Calu3 (cell line): ENCODE measurements at regions of chr11 and their contacts with region 1.

Region 1: GRCh38 chr11:73439002-73439843 is 63.0 kb downstream of the RELT start:
- DNase-seq: no peak
- H3K4me3 Mint-ChIP-seq: no peak overlapping the region
- H3K27ac Mint-ChIP-seq: no peak overlapping the region
- H3K4me1 Mint-ChIP-seq: no peaks in the 10 kb centered on the region
- H3K27me3 Mint-ChIP-seq: no peaks in the 10 kb centered on the region
- CTCF ChIP-seq: no peak

Region 2: GRCh38 chr11:72630104-72630852 is 808.9 kb before region 1 on chr11:
- CTCF ChIA-PET with region 1: interaction called, 10 read pairs
- intact Hi-C with region 1: no loop called
- DNase-seq: no peak
- H3K4me3 Mint-ChIP-seq: no peak overlapping the region
- H3K27ac Mint-ChIP-seq: no peak overlapping the region
- H3K4me1 Mint-ChIP-seq: no peaks in the 10 kb centered on the region
- H3K27me3 Mint-ChIP-seq: peaks cover 66% of the 10 kb centered on the region
- CTCF ChIP-seq: no peak

Region 3: DNA sequence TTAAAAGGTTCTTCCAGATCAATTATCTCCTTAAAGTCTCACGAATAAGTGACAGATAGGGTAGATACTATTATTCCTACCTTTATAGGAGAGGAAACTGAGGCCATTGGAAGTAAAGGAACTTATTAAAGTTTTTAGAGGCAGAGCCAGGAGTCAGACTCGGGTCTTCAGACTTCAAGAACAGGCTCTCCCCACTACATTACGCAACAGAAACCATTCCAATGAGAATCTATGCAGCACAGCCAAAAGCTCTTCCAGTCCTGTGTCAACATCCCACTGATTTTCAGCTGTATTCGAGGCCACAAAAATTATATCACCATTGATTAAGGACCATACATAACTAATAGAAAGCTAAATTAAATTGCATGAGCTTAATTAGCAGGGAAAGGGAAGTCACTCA is 14.3 kb after region 1 on chr11:
- CTCF ChIA-PET with region 1: no interaction called
- intact Hi-C with region 1: no loop called
- DNase-seq: no peak
- H3K4me3 Mint-ChIP-seq: no peak overlapping the region
- H3K27ac Mint-ChIP-seq: no peak overlapping the region
- H3K4me1 Mint-ChIP-seq: no peaks in the 10 kb centered on the region
- H3K27me3 Mint-ChIP-seq: no peaks in the 10 kb centered on the region
- CTCF ChIP-seq: no peak